ENCODE measurements at regions of chrX and their contacts with region 1.

Region 1: DNA sequence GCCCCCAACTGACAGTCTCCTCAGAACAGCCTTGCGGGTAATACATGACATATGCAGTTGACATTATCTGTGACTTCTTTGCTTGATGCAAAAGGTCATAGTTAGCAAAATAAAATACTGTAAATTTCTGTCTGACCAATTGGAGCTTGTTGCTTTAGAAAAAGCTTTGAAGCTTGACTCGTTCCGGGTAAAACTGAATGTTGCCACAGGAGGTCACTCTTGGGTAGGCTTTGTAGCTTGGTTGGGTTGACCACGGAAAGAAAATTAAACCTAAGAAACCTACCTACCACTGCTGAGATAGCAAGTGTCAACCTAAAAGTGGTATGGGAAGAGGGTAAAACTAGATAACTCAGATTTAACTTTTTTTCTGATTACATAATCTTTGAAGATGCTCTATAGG is 23.2 kb downstream of the PRPS2 start:
- DNase-seq: no peak
- H3K4me3 ChIP-seq: no peak overlapping the region
- CTCF ChIP-seq: no peak
- POLR2A ChIP-seq: no peak

Region 2: GRCh38 chrX:12901486-12901885 is 87.1 kb after region 1 on chrX:
- intact Hi-C with region 1: loop called (anchors 5 kb)
- DNase-seq: peak; percentile 42 to 88
- H3K4me3 ChIP-seq: no peak overlapping the region
- CTCF ChIP-seq: no peak
- POLR2A ChIP-seq: no peak

Region 3: GRCh38 chrX:13029341-13029740 is 214.9 kb after region 1 on chrX:
- intact Hi-C with region 1: no loop called
- DNase-seq: no peak
- H3K4me3 ChIP-seq: no peak overlapping the region
- CTCF ChIP-seq: no peak
- POLR2A ChIP-seq: no peak

Measured in lower leg skin (tissue), 4 donors.